ENCODE measurements at regions of chr20 and their contacts with region 1.

Region 1: DNA sequence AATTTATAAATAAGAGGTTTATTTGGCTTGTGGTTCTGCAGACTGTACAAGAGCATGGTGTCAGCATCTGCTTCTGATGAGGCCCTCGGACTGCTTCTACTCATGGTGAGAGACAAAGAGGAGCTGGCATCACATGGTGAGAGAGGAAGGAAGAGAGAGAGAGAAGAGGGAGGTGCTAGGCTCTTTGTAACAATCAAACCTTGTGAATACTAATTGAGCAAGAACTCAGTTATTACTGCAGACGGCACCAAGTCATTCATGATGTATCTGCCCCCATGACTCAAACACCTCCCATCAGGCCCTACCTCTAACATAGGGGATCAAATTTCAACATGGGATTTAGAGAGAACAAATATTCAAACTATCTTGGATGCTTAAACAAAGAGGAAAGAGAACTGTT is 6.3 kb upstream of the SIRPG start:
- DNase-seq: peak in 1 of 9 donors; percentile 29
- ATAC-seq: peak; percentile 53
- H3K4me3 ChIP-seq: peak overlapping the region; percentile 57
- H3K4me3 Mint-ChIP-seq: peak overlapping the region; percentile 69 to 96 (median 84)
- H3K27ac ChIP-seq: peak overlapping the region; percentile 70
- H3K27ac Mint-ChIP-seq: peak overlapping the region; percentile 70 to 98 (median 91)
- H3K4me1 ChIP-seq: peaks cover 83 to 89% of the 10 kb centered on the region in 2 donors
- H3K4me1 Mint-ChIP-seq: peaks cover 80 to 100% (median 92%) of the 10 kb centered on the region in 7 donors
- H3K27me3 ChIP-seq: no peaks in the 10 kb centered on the region
- H3K27me3 Mint-ChIP-seq: no peaks in the 10 kb centered on the region

Region 2: GRCh38 chr20:1622450-1622849 is 41.5 kb before region 1 on chr20:
- CTCF ChIA-PET with region 1: no interaction called
- POLR2A ChIA-PET with region 1: interaction called, 3 read pairs
- intact Hi-C with region 1: loop called in 1 of 2 experiments (anchors 2 kb)
- DNase-seq: peak in 5 of 9 donors; percentile 15 to 49 (median 42)
- ATAC-seq: peak; percentile 53
- H3K4me3 ChIP-seq: no peak overlapping the region
- H3K4me3 Mint-ChIP-seq: peak overlapping the region; percentile 7 to 70 (median 51)
- H3K27ac ChIP-seq: peak overlapping the region; percentile 31
- H3K27ac Mint-ChIP-seq: peak overlapping the region in 8 of 9 donors; percentile 68 to 91 (median 84)
- H3K4me1 ChIP-seq: peaks cover 31 to 52% of the 10 kb centered on the region in 2 donors
- H3K4me1 Mint-ChIP-seq: peaks cover 57 to 95% (median 89%) of the 10 kb centered on the region in 7 donors
- H3K27me3 ChIP-seq: no peaks in the 10 kb centered on the region
- H3K27me3 Mint-ChIP-seq: no peaks in the 10 kb centered on the region

Region 3: GRCh38 chr20:1651268-1652058 is 12.5 kb before region 1 on chr20:
- CTCF ChIA-PET with region 1: interaction called, 4 read pairs
- POLR2A ChIA-PET with region 1: interaction called, 25 read pairs
- intact Hi-C with region 1: loop called (anchors 1 to 2 kb)
- DNase-seq: no peak
- ATAC-seq: no peak
- H3K4me3 ChIP-seq: peak overlapping the region; percentile 8
- H3K4me3 Mint-ChIP-seq: peak overlapping the region; percentile 46 to 88 (median 74)
- H3K27ac ChIP-seq: peak overlapping the region; percentile 41
- H3K27ac Mint-ChIP-seq: peak overlapping the region in 8 of 9 donors; percentile 33 to 93 (median 88)
- H3K4me1 ChIP-seq: peaks cover 56 to 66% of the 10 kb centered on the region in 2 donors
- H3K4me1 Mint-ChIP-seq: peaks cover 27 to 95% (median 86%) of the 10 kb centered on the region in 7 donors
- H3K27me3 ChIP-seq: no peaks in the 10 kb centered on the region
- H3K27me3 Mint-ChIP-seq: no peaks in the 10 kb centered on the region

Region 4: GRCh38 chr20:1674361-1674760 is 10.4 kb after region 1 on chr20:
- CTCF ChIA-PET with region 1: interaction called, 27 read pairs
- POLR2A ChIA-PET with region 1: interaction called, 171 read pairs
- intact Hi-C with region 1: loop called (anchors 1 kb)
- DNase-seq: peak in 5 of 9 donors; percentile 34 to 55 (median 36)
- ATAC-seq: peak; percentile 76
- H3K4me3 ChIP-seq: peak overlapping the region; percentile 28
- H3K4me3 Mint-ChIP-seq: peak overlapping the region; percentile 55 to 87 (median 78)
- H3K27ac ChIP-seq: peak overlapping the region; percentile 68
- H3K27ac Mint-ChIP-seq: peak overlapping the region; percentile 80 to 97 (median 92)
- H3K4me1 ChIP-seq: peaks cover 67 to 84% of the 10 kb centered on the region in 2 donors
- H3K4me1 Mint-ChIP-seq: peaks cover 58 to 100% (median 98%) of the 10 kb centered on the region in 7 donors
- H3K27me3 ChIP-seq: no peaks in the 10 kb centered on the region
- H3K27me3 Mint-ChIP-seq: no peaks in the 10 kb centered on the region

Region 5: GRCh38 chr20:3092611-3093379 is 1428.9 kb after region 1 on chr20:
- CTCF ChIA-PET with region 1: no interaction called
- POLR2A ChIA-PET with region 1: no interaction called
- intact Hi-C with region 1: no loop called
- DNase-seq: peak in 8 of 9 donors; percentile 41 to 75 (median 70)
- ATAC-seq: peak; percentile 27
- H3K4me3 ChIP-seq: peak overlapping the region; percentile 28
- H3K4me3 Mint-ChIP-seq: peak overlapping the region; percentile 78 to 97 (median 93)
- H3K27ac ChIP-seq: peak overlapping the region; percentile 95
- H3K27ac Mint-ChIP-seq: peak overlapping the region; percentile 88 to 100 (median 100)
- H3K4me1 ChIP-seq: peaks cover 0 to 24% of the 10 kb centered on the region in 2 donors
- H3K4me1 Mint-ChIP-seq: peaks cover 17 to 50% (median 31%) of the 10 kb centered on the region in 7 donors
- H3K27me3 ChIP-seq: no peaks in the 10 kb centered on the region
- H3K27me3 Mint-ChIP-seq: peaks cover 0 to 39% (median 0%) of the 10 kb centered on the region in 5 donors

Measured in naive thymus-derived CD4-positive, alpha-beta T cell (primary cell).